WTC11 (cell line): ENCODE measurements at regions of chr3 and their contacts with region 1.

Region 1: GRCh38 chr3:129490242-129491045 is 38.0 kb upstream of the RHO start:
- DNase-seq: peak; percentile 76
- ATAC-seq: peak; percentile 91
- H3K4me3 Mint-ChIP-seq: no peak overlapping the region
- H3K27ac Mint-ChIP-seq: peak overlapping the region; percentile 28
- H3K4me1 Mint-ChIP-seq: peaks cover 42% of the 10 kb centered on the region
- H3K27me3 Mint-ChIP-seq: no peaks in the 10 kb centered on the region; the same call in none of the 2 replicates
- CTCF ChIP-seq: peak; percentile 69

Region 2: GRCh38 chr3:129003578-129004160 is 486.8 kb before region 1 on chr3:
- CTCF ChIA-PET with region 1: no interaction called
- POLR2A ChIA-PET with region 1: no interaction called
- DNase-seq: peak; percentile 54
- ATAC-seq: peak; percentile 12
- H3K4me3 Mint-ChIP-seq: peak overlapping the region; percentile 54
- H3K27ac Mint-ChIP-seq: no peak overlapping the region
- H3K4me1 Mint-ChIP-seq: peaks cover 23% of the 10 kb centered on the region
- H3K27me3 Mint-ChIP-seq: peaks cover 97% of the 10 kb centered on the region
- CTCF ChIP-seq: no peak

Region 3: DNA sequence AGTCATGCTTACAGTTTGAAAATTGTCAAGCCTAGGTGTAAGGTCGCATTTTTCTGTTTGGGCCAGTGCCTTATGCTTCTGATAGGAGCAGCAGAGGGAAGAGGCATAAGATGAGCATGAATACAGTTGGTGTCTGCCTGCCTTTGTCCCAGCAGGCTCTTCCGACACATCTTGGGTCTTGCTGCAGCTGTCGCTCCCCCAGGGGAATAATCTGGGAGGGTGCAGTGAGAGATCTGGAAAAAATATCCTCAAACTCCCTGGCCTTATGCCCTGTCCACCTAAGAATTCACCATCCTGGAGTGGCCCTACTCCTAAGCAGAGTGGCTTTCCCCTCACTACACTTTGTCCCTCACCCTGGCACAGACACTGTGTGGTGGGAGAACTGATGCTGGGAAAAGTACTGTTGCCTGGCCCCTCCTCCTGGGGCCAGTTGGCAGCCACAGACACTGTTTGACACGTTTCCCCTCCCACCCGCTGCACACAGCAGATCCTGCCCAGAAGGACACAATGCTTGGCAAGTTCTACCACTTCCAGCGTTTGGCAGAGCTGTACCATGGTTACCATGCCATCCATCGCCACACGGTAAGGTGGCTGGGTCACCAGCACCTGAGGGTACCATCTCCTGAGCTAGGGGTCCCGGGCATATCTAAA is 16.9 kb after region 1 on chr3:
- CTCF ChIA-PET with region 1: interaction called, 13 read pairs
- POLR2A ChIA-PET with region 1: interaction called, 3 read pairs
- DNase-seq: no peak
- ATAC-seq: no peak
- H3K4me3 Mint-ChIP-seq: no peak overlapping the region
- H3K27ac Mint-ChIP-seq: no peak overlapping the region
- H3K4me1 Mint-ChIP-seq: no peaks in the 10 kb centered on the region
- H3K27me3 Mint-ChIP-seq: no peaks in the 10 kb centered on the region; the same call in 1 of the 2 replicates
- CTCF ChIP-seq: no peak

Region 4: GRCh38 chr3:129567176-129567705 is 76.8 kb after region 1 on chr3:
- CTCF ChIA-PET with region 1: interaction called, 17 read pairs
- POLR2A ChIA-PET with region 1: no interaction called
- DNase-seq: no peak
- ATAC-seq: no peak
- H3K4me3 Mint-ChIP-seq: no peak overlapping the region
- H3K27ac Mint-ChIP-seq: no peak overlapping the region
- H3K4me1 Mint-ChIP-seq: no peaks in the 10 kb centered on the region
- H3K27me3 Mint-ChIP-seq: no peaks in the 10 kb centered on the region
- CTCF ChIP-seq: no peak

Region 5: GRCh38 chr3:129582799-129583198 is 92.4 kb after region 1 on chr3:
- CTCF ChIA-PET with region 1: interaction called, 12 read pairs
- POLR2A ChIA-PET with region 1: no interaction called
- DNase-seq: no peak
- ATAC-seq: no peak
- H3K4me3 Mint-ChIP-seq: no peak overlapping the region
- H3K27ac Mint-ChIP-seq: no peak overlapping the region
- H3K4me1 Mint-ChIP-seq: no peaks in the 10 kb centered on the region
- H3K27me3 Mint-ChIP-seq: no peaks in the 10 kb centered on the region
- CTCF ChIP-seq: no peak

Region 6: DNA sequence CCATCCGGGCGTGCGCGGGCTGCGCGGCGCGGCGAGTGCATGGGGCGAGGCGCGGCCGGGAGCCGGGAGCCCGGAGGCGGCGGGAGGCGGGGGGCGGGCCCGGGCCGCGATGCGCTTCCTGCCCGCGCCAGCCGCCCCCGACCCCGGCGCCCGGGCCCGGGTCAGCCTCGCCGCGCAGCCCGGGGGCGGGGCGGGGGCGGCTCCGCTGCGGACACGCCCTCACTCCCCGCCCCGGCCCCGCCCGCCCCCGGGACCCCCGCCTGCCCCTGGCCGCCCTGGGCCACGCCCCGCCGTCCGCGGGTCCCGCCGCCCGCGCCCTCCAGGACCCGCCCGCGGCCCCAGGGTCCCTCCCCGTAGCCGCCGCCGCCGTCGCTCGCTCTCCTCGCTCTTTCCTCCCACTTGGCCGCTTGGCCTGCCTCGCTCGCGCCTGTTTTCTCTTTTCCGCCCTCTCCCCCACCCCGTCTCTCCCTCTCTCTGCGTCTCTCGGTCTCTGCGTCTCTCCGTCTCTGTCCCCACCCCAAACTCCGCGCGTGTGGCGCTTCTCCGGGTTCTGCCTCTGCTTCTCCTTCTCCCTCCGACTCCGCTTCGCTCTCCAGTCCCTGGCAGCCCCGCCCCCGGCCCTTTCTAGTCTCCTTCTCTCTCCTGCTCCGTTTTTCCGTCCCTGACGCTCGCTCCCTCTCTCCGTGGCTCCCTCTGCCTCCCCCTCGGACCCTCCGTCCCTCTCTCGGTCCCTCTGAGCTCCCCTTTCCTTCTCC is 116.4 kb after region 1 on chr3 and contains the start of gene PLXND1:
- CTCF ChIA-PET with region 1: interaction called, 40 read pairs
- POLR2A ChIA-PET with region 1: no interaction called
- DNase-seq: peak; percentile 63
- ATAC-seq: peak; percentile 50
- H3K4me3 Mint-ChIP-seq: peak within 1 kb of the TSS; percentile 90
- H3K27ac Mint-ChIP-seq: peak within 1 kb of the TSS; percentile 63; the same call in 1 of the 2 replicates
- H3K4me1 Mint-ChIP-seq: peaks cover 63% of the 10 kb centered on the region
- H3K27me3 Mint-ChIP-seq: peaks cover 39% of the 10 kb centered on the region
- CTCF ChIP-seq: no peak
- total RNA-seq, gene PLXND1: 56.7 to 63.9 TPM (median 57.4 TPM) in 3 replicates

Region 7: GRCh38 chr3:129627429-129628168 is 137.2 kb after region 1 on chr3:
- CTCF ChIA-PET with region 1: interaction called, 84 read pairs
- POLR2A ChIA-PET with region 1: interaction called, 3 read pairs
- DNase-seq: peak; percentile 80
- ATAC-seq: peak; percentile 59
- H3K4me3 Mint-ChIP-seq: peak overlapping the region; percentile 89
- H3K27ac Mint-ChIP-seq: peak overlapping the region; percentile 94
- H3K4me1 Mint-ChIP-seq: peaks cover 24% of the 10 kb centered on the region
- H3K27me3 Mint-ChIP-seq: no peaks in the 10 kb centered on the region
- CTCF ChIP-seq: 0 out of 2 replicates have a peak, but pooled peaks have one; percentile 14

Region 8: DNA sequence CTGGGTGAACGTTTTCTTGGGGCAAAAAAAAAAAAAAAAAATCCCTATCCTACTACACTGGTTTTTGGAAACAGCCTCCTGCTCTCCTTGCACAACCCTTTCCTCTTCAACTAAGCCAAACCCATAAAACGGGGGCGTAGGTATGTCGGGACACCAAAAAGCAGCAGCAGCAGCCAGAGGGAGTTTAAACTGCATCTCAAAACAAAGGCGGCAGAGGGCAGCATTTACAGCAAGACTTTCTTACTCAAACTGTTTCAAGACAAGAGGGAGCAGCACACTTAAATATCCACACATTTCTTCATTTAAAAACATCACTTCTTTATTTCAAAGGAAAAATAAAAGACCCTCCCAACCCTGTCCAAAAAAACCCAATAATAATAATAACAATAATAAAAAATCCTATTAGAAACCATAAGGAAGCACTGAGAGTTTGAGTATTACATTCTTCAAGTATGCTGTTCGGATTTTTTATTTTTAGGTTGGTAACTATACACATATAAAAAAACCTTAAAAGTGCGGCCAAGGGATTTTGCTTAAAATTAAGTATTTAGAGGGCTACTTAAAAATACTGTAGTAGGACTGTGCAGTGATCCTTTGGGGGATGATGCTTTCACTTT is 159.9 kb after region 1 on chr3:
- CTCF ChIA-PET with region 1: interaction called, 13 read pairs
- POLR2A ChIA-PET with region 1: no interaction called
- DNase-seq: peak; percentile 81
- ATAC-seq: peak; percentile 74
- H3K4me3 Mint-ChIP-seq: no peak overlapping the region
- H3K27ac Mint-ChIP-seq: peak overlapping the region; percentile 54; the same call in 1 of the 2 replicates
- H3K4me1 Mint-ChIP-seq: peaks cover 48% of the 10 kb centered on the region
- H3K27me3 Mint-ChIP-seq: no peaks in the 10 kb centered on the region
- CTCF ChIP-seq: no peak; the same call in none of the 2 replicates